PC-9 (cell line): ENCODE measurements at regions of chr3 and their contacts with region 1.

Region 1: DNA sequence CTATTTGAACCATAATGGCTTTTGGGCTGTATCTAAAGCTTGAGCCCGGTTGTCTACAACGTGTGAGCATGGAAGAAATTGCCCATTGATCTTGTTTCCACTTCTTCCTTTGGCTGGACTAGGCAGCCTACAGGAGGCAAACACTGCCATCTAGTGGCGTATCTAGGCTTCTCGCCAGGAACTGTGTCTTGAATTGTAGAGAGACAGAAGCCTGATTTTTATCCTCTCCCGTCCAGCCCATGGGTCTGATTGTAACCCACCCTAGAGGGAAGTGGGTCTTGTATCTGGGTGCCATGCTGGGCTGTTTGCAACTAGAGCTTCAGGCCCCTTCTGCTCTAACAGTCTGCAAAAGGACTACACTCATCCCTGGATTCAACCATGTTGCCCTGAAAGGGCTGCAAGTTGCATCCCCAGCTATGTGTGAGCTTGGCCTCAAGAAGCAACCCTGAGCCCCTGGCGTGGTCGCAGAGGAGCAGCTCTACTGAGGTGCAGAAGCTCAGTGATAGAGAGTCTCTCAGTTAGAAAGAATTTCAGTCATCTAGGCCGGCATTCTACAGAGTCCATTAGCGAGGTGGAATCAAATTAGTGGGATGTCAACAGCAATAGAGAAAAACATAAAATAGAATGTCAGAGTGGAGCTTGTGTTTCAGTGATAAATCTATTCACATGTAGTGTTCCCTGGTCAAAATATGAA is 170.2 kb upstream of the UMPS start:
- DNase-seq: peak in 1 of 2 experiments; percentile 74
- H3K4me3 ChIP-seq: no peak overlapping the region
- H3K27ac ChIP-seq: no peak overlapping the region
- H3K4me1 ChIP-seq: peaks cover 8% of the 10 kb centered on the region
- H3K27me3 ChIP-seq: peaks cover 45% of the 10 kb centered on the region
- CTCF ChIP-seq: peak; percentile 87

Region 2: DNA sequence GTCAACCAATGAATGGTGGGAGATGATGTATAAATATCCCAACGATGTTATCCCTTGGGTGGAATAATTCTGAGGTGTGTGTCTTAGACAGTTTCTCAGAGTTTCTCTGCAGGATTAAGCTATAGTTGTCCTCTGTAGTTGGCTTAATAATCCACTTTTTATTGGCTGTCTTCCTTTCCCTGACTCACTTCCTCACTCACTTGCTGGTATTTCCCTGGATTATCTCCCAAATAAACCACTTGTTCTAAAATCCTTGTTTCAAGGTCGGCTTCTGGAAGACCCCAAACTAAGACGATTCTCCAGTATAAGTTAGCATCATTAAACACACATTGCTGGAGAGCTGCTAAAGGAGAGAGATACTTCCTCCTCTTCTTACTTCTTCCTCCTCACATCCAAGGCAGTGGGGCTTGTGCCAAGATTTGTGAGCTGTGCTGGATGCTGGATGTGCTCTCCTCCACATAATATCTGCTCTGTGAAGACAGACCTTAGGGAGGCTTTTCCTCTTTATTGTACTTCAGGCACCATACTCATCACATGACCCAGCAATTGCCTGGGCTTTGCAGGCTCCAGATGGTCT is 545.6 kb before region 1 on chr3:
- CTCF ChIA-PET with region 1: no interaction called
- POLR2A ChIA-PET with region 1: no interaction called
- intact Hi-C with region 1: loop called (anchors 5 kb)
- DNase-seq: no peak
- H3K4me3 ChIP-seq: no peak overlapping the region
- H3K27ac ChIP-seq: no peak overlapping the region
- H3K4me1 ChIP-seq: no peaks in the 10 kb centered on the region
- H3K27me3 ChIP-seq: peaks cover 54% of the 10 kb centered on the region
- CTCF ChIP-seq: no peak

Region 3: DNA sequence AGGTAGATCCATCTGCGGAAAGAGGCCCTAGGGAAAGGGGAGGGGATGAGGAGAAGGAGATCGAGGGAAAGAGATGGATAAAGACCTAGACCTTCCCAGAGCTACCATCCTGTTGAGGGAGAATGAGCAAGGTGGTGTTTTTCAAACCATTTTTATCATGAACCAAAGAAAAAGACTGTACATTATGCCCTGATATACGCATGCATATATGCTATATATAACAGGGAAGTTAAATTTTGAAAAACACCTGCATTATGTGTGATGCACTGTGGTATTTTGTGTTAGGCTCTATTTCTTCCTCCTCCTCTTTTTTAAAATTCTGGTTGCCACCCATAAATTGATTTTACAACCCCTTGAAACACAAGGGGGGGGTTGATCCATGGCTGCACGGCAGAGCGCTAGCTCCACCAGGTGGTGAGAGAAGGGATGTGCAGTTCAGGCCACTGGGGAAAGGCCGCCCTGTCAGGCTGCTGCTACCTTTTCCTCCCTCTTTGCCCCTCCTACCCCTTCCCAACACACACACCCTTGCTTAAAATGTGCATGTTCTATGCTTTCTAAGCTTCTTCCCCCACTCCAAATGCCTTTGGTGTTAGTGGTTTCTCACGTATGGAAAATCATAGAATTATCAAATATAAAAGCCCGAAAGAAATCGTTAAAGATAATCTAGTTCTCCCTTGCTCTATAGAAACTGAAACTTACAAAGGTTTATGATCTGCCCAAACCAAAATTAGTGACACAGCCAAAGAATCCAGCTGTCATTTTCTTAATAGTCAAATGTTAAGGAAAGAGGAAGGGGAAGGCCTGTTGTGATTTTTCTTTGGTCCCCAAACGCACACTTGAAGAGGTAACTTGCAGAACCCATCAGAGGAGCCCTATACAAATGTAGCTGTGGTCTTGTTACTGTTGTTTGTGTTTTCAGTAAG is 91.8 kb before region 1 on chr3:
- CTCF ChIA-PET with region 1: interaction called, 3 read pairs
- POLR2A ChIA-PET with region 1: no interaction called
- intact Hi-C with region 1: loop called (anchors 2 kb)
- DNase-seq: peak in 1 of 2 experiments; percentile 49
- H3K4me3 ChIP-seq: no peak overlapping the region
- H3K27ac ChIP-seq: no peak overlapping the region
- H3K4me1 ChIP-seq: no peaks in the 10 kb centered on the region
- H3K27me3 ChIP-seq: peaks cover 61% of the 10 kb centered on the region
- CTCF ChIP-seq: peak; percentile 92

Region 4: DNA sequence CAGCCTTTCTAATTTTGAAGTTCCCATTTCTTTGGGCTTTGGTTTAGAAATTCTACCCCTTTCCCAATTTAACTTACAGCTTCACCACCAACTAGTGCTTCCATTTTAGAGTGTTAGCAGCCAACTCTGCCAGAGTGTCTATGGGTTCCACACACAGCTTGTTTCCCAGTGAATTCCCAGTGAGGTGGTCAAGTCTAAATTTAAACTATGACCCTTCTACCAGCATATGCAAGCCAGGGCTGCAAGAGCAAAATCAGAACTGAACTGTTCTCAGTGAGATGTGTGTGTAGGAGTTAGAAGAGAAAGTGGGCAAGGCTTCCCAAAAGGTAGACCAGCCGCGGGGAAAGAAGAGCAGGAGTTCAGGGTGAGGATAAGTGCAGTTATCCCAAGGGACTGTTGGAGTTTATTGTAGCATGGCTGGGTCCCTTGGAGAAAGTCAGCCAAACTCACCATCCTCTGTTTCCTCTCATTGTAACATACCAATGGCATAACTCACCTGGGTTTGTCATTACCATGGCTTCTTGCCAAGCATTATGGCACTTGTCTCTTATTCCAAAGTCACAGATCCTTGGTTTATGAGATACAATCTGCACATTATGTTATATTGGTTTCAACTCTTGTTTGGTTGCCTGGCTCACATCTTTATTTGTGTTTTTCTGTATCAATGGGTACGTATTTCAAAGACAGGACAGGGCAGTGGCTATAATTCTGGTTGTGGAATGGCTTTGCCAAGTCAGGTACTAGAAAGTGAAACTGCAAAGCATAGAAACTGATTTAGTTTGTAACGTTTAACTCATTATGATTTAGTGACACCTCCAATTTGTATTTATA is 40.0 kb after region 1 on chr3:
- CTCF ChIA-PET with region 1: interaction called, 10 read pairs
- POLR2A ChIA-PET with region 1: no interaction called
- intact Hi-C with region 1: loop called (anchors 2 kb)
- DNase-seq: peak; percentile 68 to 87
- H3K4me3 ChIP-seq: no peak overlapping the region
- H3K27ac ChIP-seq: no peak overlapping the region
- H3K4me1 ChIP-seq: peaks cover 19% of the 10 kb centered on the region
- H3K27me3 ChIP-seq: no peaks in the 10 kb centered on the region
- CTCF ChIP-seq: no peak

Region 5: GRCh38 chr3:124650798-124651197 is 90.8 kb after region 1 on chr3:
- CTCF ChIA-PET with region 1: no interaction called
- POLR2A ChIA-PET with region 1: no interaction called
- intact Hi-C with region 1: no loop called
- DNase-seq: no peak
- H3K4me3 ChIP-seq: no peak overlapping the region
- H3K27ac ChIP-seq: no peak overlapping the region
- H3K4me1 ChIP-seq: no peaks in the 10 kb centered on the region
- H3K27me3 ChIP-seq: no peaks in the 10 kb centered on the region
- CTCF ChIP-seq: no peak

Region 6: GRCh38 chr3:124741027-124741426 is 181.0 kb after region 1 on chr3:
- CTCF ChIA-PET with region 1: no interaction called
- POLR2A ChIA-PET with region 1: no interaction called
- intact Hi-C with region 1: loop called (anchors 5 kb)
- DNase-seq: no peak
- H3K4me3 ChIP-seq: no peak overlapping the region
- H3K27ac ChIP-seq: no peak overlapping the region
- H3K4me1 ChIP-seq: no peaks in the 10 kb centered on the region
- H3K27me3 ChIP-seq: no peaks in the 10 kb centered on the region
- CTCF ChIP-seq: no peak

Region 7: GRCh38 chr3:124905849-124906248 is 345.8 kb after region 1 on chr3:
- CTCF ChIA-PET with region 1: no interaction called
- POLR2A ChIA-PET with region 1: no interaction called
- intact Hi-C with region 1: loop called (anchors 1 kb)
- DNase-seq: no peak
- H3K4me3 ChIP-seq: no peak overlapping the region
- H3K27ac ChIP-seq: no peak overlapping the region
- H3K4me1 ChIP-seq: no peaks in the 10 kb centered on the region
- H3K27me3 ChIP-seq: no peaks in the 10 kb centered on the region
- CTCF ChIP-seq: no peak